ENCODE measurements at regions of chr15 and their contacts with region 1.

Region 1: GRCh38 chr15:99076552-99077308 is 28.1 kb upstream of the SYNM start:
- DNase-seq: peak; percentile 43
- H3K4me3 Mint-ChIP-seq: peak overlapping the region; percentile 70
- H3K27ac Mint-ChIP-seq: no peak overlapping the region
- H3K4me1 Mint-ChIP-seq: peaks cover 4% of the 10 kb centered on the region
- H3K27me3 Mint-ChIP-seq: peaks cover 9% of the 10 kb centered on the region

Region 2: GRCh38 chr15:98442379-98442833 is 634.3 kb before region 1 on chr15:
- CTCF ChIA-PET with region 1: interaction called, 7 read pairs
- POLR2A ChIA-PET with region 1: no interaction called
- intact Hi-C with region 1: loop called (anchors 1 kb)
- DNase-seq: peak; percentile 70
- H3K4me3 Mint-ChIP-seq: no peak overlapping the region
- H3K27ac Mint-ChIP-seq: no peak overlapping the region
- H3K4me1 Mint-ChIP-seq: no peaks in the 10 kb centered on the region
- H3K27me3 Mint-ChIP-seq: peaks cover 16% of the 10 kb centered on the region

Region 3: DNA sequence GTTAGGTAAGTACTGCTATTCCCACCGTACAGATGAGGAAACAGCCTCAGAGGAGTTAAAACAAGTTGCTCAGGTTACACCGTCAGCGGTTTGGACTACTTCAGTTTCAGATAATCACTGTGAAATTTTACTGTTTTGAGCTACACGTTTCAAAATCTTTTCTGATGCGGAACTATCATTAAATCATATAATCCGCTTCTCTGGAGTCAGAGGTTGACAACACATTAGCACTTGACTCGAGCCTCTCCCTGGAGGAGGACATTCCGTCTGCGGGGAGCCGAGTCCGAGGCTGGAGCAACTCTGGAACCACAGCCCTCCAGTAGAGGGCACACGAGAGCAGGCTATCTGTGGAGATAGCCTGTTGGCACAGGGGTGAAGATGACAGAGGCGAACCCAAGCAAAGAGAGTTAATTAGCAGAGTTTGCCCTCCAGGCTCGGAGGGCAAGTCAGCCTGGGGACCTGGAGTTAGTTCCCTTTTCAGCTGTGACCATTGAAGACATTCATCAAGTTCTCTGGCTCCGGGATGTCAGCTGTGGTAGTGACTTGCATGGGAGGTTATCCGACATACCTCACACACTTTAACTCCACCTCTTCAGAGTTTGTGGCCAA is 297.2 kb before region 1 on chr15:
- CTCF ChIA-PET with region 1: interaction called, 21 read pairs
- POLR2A ChIA-PET with region 1: no interaction called
- intact Hi-C with region 1: loop called (anchors 1 kb)
- DNase-seq: peak; percentile 82
- H3K4me3 Mint-ChIP-seq: peak overlapping the region; percentile 21
- H3K27ac Mint-ChIP-seq: no peak overlapping the region
- H3K4me1 Mint-ChIP-seq: peaks cover 20% of the 10 kb centered on the region
- H3K27me3 Mint-ChIP-seq: peaks cover 2% of the 10 kb centered on the region

Region 4: GRCh38 chr15:99059010-99059981 is 17.4 kb before region 1 on chr15:
- CTCF ChIA-PET with region 1: interaction called, 34 read pairs
- POLR2A ChIA-PET with region 1: interaction called, 3 read pairs
- intact Hi-C with region 1: no loop called
- DNase-seq: peak; percentile 54
- H3K4me3 Mint-ChIP-seq: peak overlapping the region; percentile 49
- H3K27ac Mint-ChIP-seq: no peak overlapping the region
- H3K4me1 Mint-ChIP-seq: peaks cover 4% of the 10 kb centered on the region
- H3K27me3 Mint-ChIP-seq: peaks cover 35% of the 10 kb centered on the region

Region 5: GRCh38 chr15:99104788-99105513 is 28.2 kb after region 1 on chr15 and contains the start of gene SYNM:
- CTCF ChIA-PET with region 1: interaction called, 16 read pairs
- POLR2A ChIA-PET with region 1: no interaction called
- intact Hi-C with region 1: no loop called
- DNase-seq: peak; percentile 60
- H3K4me3 Mint-ChIP-seq: peak within 1 kb of the TSS; percentile 62
- H3K27ac Mint-ChIP-seq: no peak within 1 kb of the TSS
- H3K4me1 Mint-ChIP-seq: peaks cover 10% of the 10 kb centered on the region
- H3K27me3 Mint-ChIP-seq: peaks cover 35% of the 10 kb centered on the region
- total RNA-seq, gene SYNM: 2.6 to 2.7 TPM

Region 6: GRCh38 chr15:99169769-99170311 is 93.1 kb after region 1 on chr15:
- CTCF ChIA-PET with region 1: no interaction called
- POLR2A ChIA-PET with region 1: no interaction called
- intact Hi-C with region 1: no loop called
- DNase-seq: no peak
- H3K4me3 Mint-ChIP-seq: no peak overlapping the region
- H3K27ac Mint-ChIP-seq: no peak overlapping the region
- H3K4me1 Mint-ChIP-seq: no peaks in the 10 kb centered on the region
- H3K27me3 Mint-ChIP-seq: no peaks in the 10 kb centered on the region

Region 7: GRCh38 chr15:99305761-99306505 is 229.2 kb after region 1 on chr15:
- CTCF ChIA-PET with region 1: no interaction called
- POLR2A ChIA-PET with region 1: no interaction called
- intact Hi-C with region 1: no loop called
- DNase-seq: no peak
- H3K4me3 Mint-ChIP-seq: no peak overlapping the region
- H3K27ac Mint-ChIP-seq: no peak overlapping the region
- H3K4me1 Mint-ChIP-seq: no peaks in the 10 kb centered on the region
- H3K27me3 Mint-ChIP-seq: no peaks in the 10 kb centered on the region

Measured in activated CD4-positive, alpha-beta memory T cell treated with anti-CD3 and anti-CD28 coated beads for 36 hours (primary cell).